Activated naive CD4-positive, alpha-beta T cell treated with anti-CD3 and anti-CD28 coated beads for 36 hours (primary cell): ENCODE measurements at regions of chr1 and their contacts with region 1.

Region 1: DNA sequence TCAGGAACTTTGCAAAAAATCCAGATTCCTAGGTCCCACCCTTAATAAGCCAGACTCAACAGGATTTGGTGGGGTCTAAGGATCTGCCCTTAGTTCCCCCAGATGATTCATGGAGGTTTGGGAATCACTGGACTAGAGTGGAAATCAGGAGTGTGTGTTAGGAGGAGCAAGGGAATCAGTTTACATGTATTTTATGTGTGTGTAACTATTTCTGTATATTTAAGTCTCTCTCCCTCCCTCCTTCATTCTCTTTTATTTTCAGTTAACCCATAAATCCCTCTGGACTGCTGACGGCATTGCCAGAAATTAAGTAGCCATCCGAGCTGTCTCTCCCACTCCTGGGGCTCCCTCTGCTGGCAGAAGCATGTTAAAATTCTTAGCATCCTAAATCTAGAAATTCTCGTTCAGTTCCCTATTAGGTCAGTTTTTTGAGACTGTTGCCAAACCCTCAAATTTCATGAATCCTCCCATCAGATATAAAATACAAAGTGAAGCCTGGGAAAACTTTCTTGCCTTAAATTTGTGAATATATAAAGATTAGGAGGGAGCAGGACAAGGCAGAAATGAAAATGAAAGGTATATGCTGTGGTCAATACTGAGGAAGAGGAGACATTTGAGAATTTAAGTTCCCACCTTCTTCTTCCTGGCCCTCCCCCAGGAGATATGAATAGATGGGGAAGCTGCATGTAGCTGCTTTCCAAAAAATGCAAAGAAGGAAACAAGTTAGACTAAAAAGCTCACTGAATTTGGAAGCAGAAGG is 11.7 kb upstream of the HSD11B1 start:
- DNase-seq: peak; percentile 91
- H3K4me3 Mint-ChIP-seq: no peak overlapping the region
- H3K27ac Mint-ChIP-seq: peak overlapping the region; percentile 59
- H3K4me1 Mint-ChIP-seq: peaks cover 68% of the 10 kb centered on the region
- H3K27me3 Mint-ChIP-seq: no peaks in the 10 kb centered on the region

Region 2: DNA sequence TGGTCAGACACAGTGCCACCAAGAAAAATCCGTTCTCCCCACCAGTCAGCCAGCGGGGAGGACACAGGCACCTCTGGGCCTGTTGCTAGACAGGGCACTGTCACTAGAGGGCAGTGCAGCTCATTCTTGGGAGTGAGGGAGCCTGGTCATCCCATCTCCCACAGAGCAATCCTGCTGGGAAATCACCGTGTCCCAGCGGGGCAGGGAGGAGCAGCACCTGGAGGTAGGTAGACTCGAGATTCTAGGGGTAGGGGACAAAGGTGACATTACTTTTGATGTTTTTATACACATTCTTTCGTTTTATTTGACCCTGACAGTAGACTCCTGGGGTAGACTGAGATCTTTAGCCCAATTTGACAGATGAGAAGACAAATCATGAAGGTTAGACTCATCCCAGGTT is 116.1 kb before region 1 on chr1:
- CTCF ChIA-PET with region 1: interaction called, 7 read pairs
- intact Hi-C with region 1: loop called (anchors 1 kb)
- DNase-seq: peak; percentile 83
- H3K4me3 Mint-ChIP-seq: no peak overlapping the region
- H3K27ac Mint-ChIP-seq: no peak overlapping the region
- H3K4me1 Mint-ChIP-seq: no peaks in the 10 kb centered on the region
- H3K27me3 Mint-ChIP-seq: no peaks in the 10 kb centered on the region

Region 3: GRCh38 chr1:209601809-209602657 is 90.9 kb before region 1 on chr1:
- CTCF ChIA-PET with region 1: interaction called, 6 read pairs
- intact Hi-C with region 1: loop called (anchors 1 kb)
- DNase-seq: peak; percentile 73
- H3K4me3 Mint-ChIP-seq: no peak overlapping the region
- H3K27ac Mint-ChIP-seq: no peak overlapping the region
- H3K4me1 Mint-ChIP-seq: peaks cover 11% of the 10 kb centered on the region
- H3K27me3 Mint-ChIP-seq: peaks cover 10% of the 10 kb centered on the region

Region 4: GRCh38 chr1:209607102-209607794 is 85.7 kb before region 1 on chr1:
- CTCF ChIA-PET with region 1: interaction called, 6 read pairs
- intact Hi-C with region 1: loop called (anchors 1 kb)
- DNase-seq: peak; percentile 88
- H3K4me3 Mint-ChIP-seq: peak overlapping the region; percentile 51
- H3K27ac Mint-ChIP-seq: peak overlapping the region; percentile 86
- H3K4me1 Mint-ChIP-seq: peaks cover 11% of the 10 kb centered on the region
- H3K27me3 Mint-ChIP-seq: no peaks in the 10 kb centered on the region

Region 5: GRCh38 chr1:209627732-209628196 is 65.2 kb before region 1 on chr1:
- CTCF ChIA-PET with region 1: interaction called, 6 read pairs
- intact Hi-C with region 1: loop called (anchors 1 kb)
- DNase-seq: peak; percentile 89
- H3K4me3 Mint-ChIP-seq: no peak overlapping the region
- H3K27ac Mint-ChIP-seq: no peak overlapping the region
- H3K4me1 Mint-ChIP-seq: peaks cover 15% of the 10 kb centered on the region
- H3K27me3 Mint-ChIP-seq: no peaks in the 10 kb centered on the region

Region 6: GRCh38 chr1:209651148-209651547 is 41.8 kb before region 1 on chr1:
- CTCF ChIA-PET with region 1: interaction called, 9 read pairs
- intact Hi-C with region 1: loop called (anchors 1 kb)
- DNase-seq: peak; percentile 89
- H3K4me3 Mint-ChIP-seq: peak overlapping the region; percentile 36
- H3K27ac Mint-ChIP-seq: peak overlapping the region; percentile 25
- H3K4me1 Mint-ChIP-seq: peaks cover 50% of the 10 kb centered on the region
- H3K27me3 Mint-ChIP-seq: no peaks in the 10 kb centered on the region

Region 7: GRCh38 chr1:209704584-209704983 is 11.7 kb after region 1 on chr1 and contains the start of gene HSD11B1:
- CTCF ChIA-PET with region 1: interaction called, 12 read pairs
- intact Hi-C with region 1: no loop called
- DNase-seq: no peak
- H3K4me3 Mint-ChIP-seq: peak within 1 kb of the TSS; percentile 58
- H3K27ac Mint-ChIP-seq: peak within 1 kb of the TSS; percentile 94
- H3K4me1 Mint-ChIP-seq: peaks cover 81% of the 10 kb centered on the region
- H3K27me3 Mint-ChIP-seq: no peaks in the 10 kb centered on the region
- total RNA-seq, gene HSD11B1: 6.7 to 8.0 TPM

Region 8: GRCh38 chr1:210288106-210288505 is 595.2 kb after region 1 on chr1:
- CTCF ChIA-PET with region 1: no interaction called
- intact Hi-C with region 1: no loop called
- DNase-seq: no peak
- H3K4me3 Mint-ChIP-seq: no peak overlapping the region
- H3K27ac Mint-ChIP-seq: no peak overlapping the region
- H3K4me1 Mint-ChIP-seq: no peaks in the 10 kb centered on the region
- H3K27me3 Mint-ChIP-seq: peaks cover 47% of the 10 kb centered on the region